ENCODE measurements at regions of chr11 and their contacts with region 1.

Region 1: DNA sequence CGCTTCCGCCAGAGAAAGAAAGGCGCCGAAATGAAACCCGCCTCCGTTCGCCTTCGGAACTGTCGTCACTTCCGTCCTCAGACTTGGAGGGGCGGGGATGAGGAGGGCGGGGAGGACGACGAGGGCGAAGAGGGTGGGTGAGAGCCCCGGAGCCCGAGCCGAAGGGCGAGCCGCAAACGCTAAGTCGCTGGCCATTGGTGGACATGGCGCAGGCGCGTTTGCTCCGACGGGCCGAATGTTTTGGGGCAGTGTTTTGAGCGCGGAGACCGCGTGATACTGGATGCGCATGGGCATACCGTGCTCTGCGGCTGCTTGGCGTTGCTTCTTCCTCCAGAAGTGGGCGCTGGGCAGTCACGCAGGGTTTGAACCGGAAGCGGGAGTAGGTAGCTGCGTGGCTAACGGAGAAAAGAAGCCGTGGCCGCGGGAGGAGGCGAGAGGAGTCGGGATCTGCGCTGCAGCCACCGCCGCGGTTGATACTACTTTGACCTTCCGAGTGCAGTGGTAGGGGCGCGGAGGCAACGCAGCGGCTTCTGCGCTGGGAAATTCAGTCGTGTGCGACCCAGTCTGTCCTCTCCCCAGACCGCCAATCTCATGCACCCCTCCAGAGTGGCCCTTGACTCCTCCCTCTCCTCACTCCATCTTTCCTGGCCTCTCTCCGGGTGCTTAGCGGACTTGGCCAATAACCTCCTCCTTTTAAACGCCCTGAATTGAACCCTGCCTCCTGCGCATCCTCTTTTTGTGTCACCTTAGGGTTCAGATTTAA is at the start of gene ATM:
- DNase-seq: peak; percentile 98 to 100 (median 99)
- ATAC-seq: peak; percentile 77
- H3K4me3 ChIP-seq: peak within 1 kb of the TSS; percentile 90 to 92
- H3K4me3 Mint-ChIP-seq: no peak within 1 kb of the TSS
- H3K27ac ChIP-seq: peak within 1 kb of the TSS; percentile 96 to 97
- H3K27ac Mint-ChIP-seq: no peak within 1 kb of the TSS
- H3K4me1 ChIP-seq: peaks cover 36% of the 10 kb centered on the region
- H3K4me1 Mint-ChIP-seq: peaks cover 52% of the 10 kb centered on the region
- H3K27me3 ChIP-seq: no peaks in the 10 kb centered on the region
- H3K27me3 Mint-ChIP-seq: no peaks in the 10 kb centered on the region
- CTCF ChIP-seq: peak; percentile 70
- total RNA-seq, gene ATM: 272 to 273 TPM

Region 2: GRCh38 chr11:108008656-108009496 is 214.0 kb before region 1 on chr11 and contains the start of gene CUL5:
- CTCF ChIA-PET with region 1: no interaction called
- POLR2A ChIA-PET with region 1: interaction called, 5 read pairs
- intact Hi-C with region 1: loop called in 1 of 2 experiments (anchors 5 kb)
- DNase-seq: peak; percentile 83 to 95 (median 89)
- ATAC-seq: peak; percentile 88
- H3K4me3 ChIP-seq: peak within 1 kb of the TSS; percentile 99
- H3K4me3 Mint-ChIP-seq: no peak within 1 kb of the TSS
- H3K27ac ChIP-seq: peak within 1 kb of the TSS; percentile 97 to 98
- H3K27ac Mint-ChIP-seq: peak within 1 kb of the TSS; percentile 98
- H3K4me1 ChIP-seq: peaks cover 24% of the 10 kb centered on the region
- H3K4me1 Mint-ChIP-seq: peaks cover 3% of the 10 kb centered on the region
- H3K27me3 ChIP-seq: no peaks in the 10 kb centered on the region
- H3K27me3 Mint-ChIP-seq: no peaks in the 10 kb centered on the region
- CTCF ChIP-seq: peak; percentile 70
- total RNA-seq, gene CUL5: 73.3 to 75.0 TPM

Region 3: GRCh38 chr11:108237058-108237481 is 14.2 kb after region 1 on chr11:
- CTCF ChIA-PET with region 1: interaction called, 68 read pairs
- POLR2A ChIA-PET with region 1: interaction called, 384 read pairs
- intact Hi-C with region 1: loop called (anchors 1 kb)
- DNase-seq: peak in 2 of 9 experiments; percentile 59 to 75
- ATAC-seq: peak; percentile 39
- H3K4me3 ChIP-seq: peak overlapping the region; percentile 2 to 35
- H3K4me3 Mint-ChIP-seq: peak overlapping the region; percentile 72
- H3K27ac ChIP-seq: peak overlapping the region; percentile 57 to 82
- H3K27ac Mint-ChIP-seq: peak overlapping the region; percentile 96
- H3K4me1 ChIP-seq: peaks cover 95% of the 10 kb centered on the region
- H3K4me1 Mint-ChIP-seq: peaks cover 83% of the 10 kb centered on the region
- H3K27me3 ChIP-seq: no peaks in the 10 kb centered on the region
- H3K27me3 Mint-ChIP-seq: no peaks in the 10 kb centered on the region
- CTCF ChIP-seq: no peak

Region 4: DNA sequence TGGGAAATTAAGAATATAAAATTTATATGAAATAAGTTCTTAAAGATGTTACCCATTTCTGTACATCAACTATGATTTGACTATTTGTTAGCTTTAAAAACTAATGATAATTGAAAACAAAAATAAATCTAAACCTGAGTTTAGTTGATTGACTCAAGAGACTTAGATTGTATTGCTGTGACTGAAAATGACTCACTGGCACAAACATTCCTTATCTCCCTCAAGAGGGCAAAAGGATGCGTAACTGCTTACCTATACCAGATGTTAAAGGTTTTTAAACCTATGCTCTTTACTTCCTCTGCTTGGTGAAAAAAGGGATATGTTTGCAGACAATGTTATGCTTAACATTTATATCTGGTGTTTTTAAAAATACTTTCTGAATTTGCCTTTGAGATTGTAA is 30.3 kb after region 1 on chr11:
- CTCF ChIA-PET with region 1: interaction called, 7 read pairs
- POLR2A ChIA-PET with region 1: interaction called, 40 read pairs
- intact Hi-C with region 1: loop called (anchors 1 to 5 kb)
- DNase-seq: peak in 1 of 9 experiments; percentile 46
- ATAC-seq: peak; percentile 76
- H3K4me3 ChIP-seq: no peak overlapping the region
- H3K4me3 Mint-ChIP-seq: no peak overlapping the region
- H3K27ac ChIP-seq: peak overlapping the region in 1 of 2 experiments; percentile 41
- H3K27ac Mint-ChIP-seq: peak overlapping the region; percentile 64
- H3K4me1 ChIP-seq: peaks cover 45% of the 10 kb centered on the region
- H3K4me1 Mint-ChIP-seq: peaks cover 57% of the 10 kb centered on the region
- H3K27me3 ChIP-seq: no peaks in the 10 kb centered on the region
- H3K27me3 Mint-ChIP-seq: no peaks in the 10 kb centered on the region
- CTCF ChIP-seq: no peak

Region 5: DNA sequence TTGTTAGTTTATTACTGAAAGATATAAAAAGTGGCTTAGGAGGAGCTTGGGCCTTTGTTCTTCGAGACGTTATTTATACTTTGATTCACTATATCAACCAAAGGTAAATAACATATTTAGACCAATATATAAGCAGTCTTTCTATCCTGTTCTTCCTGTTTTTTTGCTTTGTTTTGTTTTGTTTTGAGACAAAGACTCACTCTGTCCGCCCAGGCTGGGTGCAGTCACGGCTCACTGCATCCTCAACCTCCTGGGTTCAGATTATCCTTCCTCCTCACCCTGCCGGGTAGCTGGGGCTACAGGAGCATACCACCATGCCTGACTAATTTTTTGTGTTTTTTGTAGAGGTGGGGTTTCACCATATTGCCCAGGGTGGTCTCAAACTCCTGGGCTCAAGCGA is 66.8 kb after region 1 on chr11:
- CTCF ChIA-PET with region 1: interaction called, 3 read pairs
- POLR2A ChIA-PET with region 1: interaction called, 56 read pairs
- intact Hi-C with region 1: loop called in 1 of 2 experiments (anchors 2 kb)
- DNase-seq: no peak
- ATAC-seq: no peak
- H3K4me3 ChIP-seq: no peak overlapping the region
- H3K4me3 Mint-ChIP-seq: no peak overlapping the region
- H3K27ac ChIP-seq: peak overlapping the region in 1 of 2 experiments; percentile 20
- H3K27ac Mint-ChIP-seq: peak overlapping the region; percentile 81
- H3K4me1 ChIP-seq: peaks cover 28% of the 10 kb centered on the region
- H3K4me1 Mint-ChIP-seq: peaks cover 28% of the 10 kb centered on the region
- H3K27me3 ChIP-seq: no peaks in the 10 kb centered on the region
- H3K27me3 Mint-ChIP-seq: no peaks in the 10 kb centered on the region
- CTCF ChIP-seq: no peak

Region 6: DNA sequence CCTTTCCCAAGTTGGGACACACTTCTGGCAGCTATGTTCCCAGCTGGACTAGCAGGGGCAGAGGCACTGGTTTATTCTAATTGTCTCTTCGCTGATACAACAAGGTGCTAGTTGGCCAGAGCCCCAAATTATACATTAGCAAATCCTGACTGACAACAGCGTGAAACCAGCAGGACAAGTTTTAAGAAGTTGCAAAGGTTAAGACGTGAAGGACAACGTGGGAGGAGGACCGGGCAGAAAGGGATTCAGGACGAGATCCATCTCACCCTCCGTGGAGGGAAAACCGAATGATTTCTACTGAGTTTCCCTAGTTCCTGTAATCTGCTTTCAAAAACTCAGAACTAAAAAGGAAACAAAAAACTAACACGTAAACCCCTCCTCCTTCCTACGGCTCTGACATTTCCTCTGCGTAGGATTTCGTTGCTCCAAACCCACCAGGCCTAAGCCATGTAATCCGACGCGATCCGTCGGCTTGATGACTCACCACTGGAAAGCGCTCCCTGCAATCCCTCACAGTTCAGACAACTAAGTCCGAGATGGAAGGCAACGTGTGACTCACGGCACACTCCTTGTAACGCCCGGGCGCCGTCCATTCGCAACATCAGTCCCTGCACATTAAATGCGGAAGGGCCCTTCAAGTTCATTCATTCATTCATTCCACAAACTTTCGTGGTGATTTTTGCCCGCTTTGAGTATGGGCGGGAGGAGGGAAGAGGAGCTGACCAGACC is 274.6 kb after region 1 on chr11:
- CTCF ChIA-PET with region 1: no interaction called
- POLR2A ChIA-PET with region 1: no interaction called
- intact Hi-C with region 1: loop called in 1 of 2 experiments (anchors 5 kb)
- DNase-seq: peak; percentile 24 to 91 (median 65)
- ATAC-seq: peak; percentile 87
- H3K4me3 ChIP-seq: peak overlapping the region; percentile 75 to 78
- H3K4me3 Mint-ChIP-seq: peak overlapping the region; percentile 98
- H3K27ac ChIP-seq: peak overlapping the region; percentile 92 to 94
- H3K27ac Mint-ChIP-seq: peak overlapping the region; percentile 99
- H3K4me1 ChIP-seq: peaks cover 9% of the 10 kb centered on the region
- H3K4me1 Mint-ChIP-seq: peaks cover 28% of the 10 kb centered on the region
- H3K27me3 ChIP-seq: no peaks in the 10 kb centered on the region
- H3K27me3 Mint-ChIP-seq: no peaks in the 10 kb centered on the region
- CTCF ChIP-seq: no peak

Region 7: GRCh38 chr11:108664730-108665525 is 442.1 kb after region 1 on chr11 and contains the start of gene DDX10:
- CTCF ChIA-PET with region 1: no interaction called
- POLR2A ChIA-PET with region 1: no interaction called
- intact Hi-C with region 1: loop called in 1 of 2 experiments (anchors 1 kb)
- DNase-seq: peak; percentile 97 to 99 (median 99)
- ATAC-seq: peak; percentile 99
- H3K4me3 ChIP-seq: peak within 1 kb of the TSS; percentile 82 to 85
- H3K4me3 Mint-ChIP-seq: peak within 1 kb of the TSS; percentile 100
- H3K27ac ChIP-seq: peak within 1 kb of the TSS; percentile 66 to 71
- H3K27ac Mint-ChIP-seq: peak within 1 kb of the TSS; percentile 98
- H3K4me1 ChIP-seq: peaks cover 30% of the 10 kb centered on the region
- H3K4me1 Mint-ChIP-seq: peaks cover 49% of the 10 kb centered on the region
- H3K27me3 ChIP-seq: no peaks in the 10 kb centered on the region
- H3K27me3 Mint-ChIP-seq: no peaks in the 10 kb centered on the region
- CTCF ChIP-seq: no peak
- total RNA-seq, gene DDX10: 15.4 to 16.5 TPM

Measured in CD8-positive, alpha-beta T cell (primary cell).